ENCODE measurements at regions of chr3 and their contacts with region 1.

Region 1: DNA sequence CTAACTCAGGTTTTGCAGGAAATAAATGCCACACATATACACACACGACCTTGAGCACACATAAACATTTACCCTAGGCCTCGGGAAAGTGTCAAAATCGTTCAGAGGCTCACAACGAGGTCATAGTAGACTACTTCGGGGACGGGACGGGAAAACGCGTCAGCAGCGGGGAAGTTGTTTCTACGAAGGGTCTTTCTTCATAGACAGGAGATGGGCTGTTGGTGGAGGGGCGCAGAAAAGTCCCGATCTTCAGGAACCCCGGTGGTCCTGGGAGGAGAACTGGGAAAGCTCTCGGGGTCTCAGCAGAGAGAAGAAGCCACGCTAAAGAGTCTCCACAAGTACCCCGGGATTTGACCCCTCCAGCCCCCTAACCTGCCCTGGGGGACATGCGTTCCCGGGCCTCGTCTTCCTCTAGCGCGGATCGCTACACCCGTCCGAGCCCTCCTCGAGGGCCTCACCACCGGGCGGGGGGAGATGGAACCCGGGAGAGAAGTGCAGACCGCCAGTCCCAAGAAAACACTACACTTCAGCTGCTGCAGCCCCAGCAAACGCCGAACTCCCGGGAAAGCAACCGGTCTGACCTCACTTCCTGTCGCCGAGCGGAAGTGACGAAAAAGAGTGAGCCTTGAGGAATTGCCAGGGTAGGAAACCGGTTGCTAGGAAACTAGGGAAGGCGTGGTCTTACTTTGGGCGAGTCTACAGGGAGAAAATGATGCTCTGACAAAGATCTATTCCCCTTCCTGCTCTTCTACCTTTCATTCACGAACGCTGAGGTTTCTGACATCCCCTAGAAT is at the start of gene PIK3R4:
- DNase-seq: peak; percentile 89 to 97 (median 94)
- H3K4me3 ChIP-seq: peak within 1 kb of the TSS; percentile 82
- H3K4me3 Mint-ChIP-seq: peak within 1 kb of the TSS in 6 of 7 donors; percentile 89 to 90 (median 89)
- H3K27ac ChIP-seq: peak within 1 kb of the TSS; percentile 91
- H3K27ac Mint-ChIP-seq: peak within 1 kb of the TSS in 7 of 8 donors; percentile 93 to 99 (median 98)
- H3K4me1 ChIP-seq: peaks cover 44% of the 10 kb centered on the region
- H3K4me1 Mint-ChIP-seq: peaks cover 48 to 53% (median 51%) of the 10 kb centered on the region in 3 donors
- H3K27me3 ChIP-seq: no peaks in the 10 kb centered on the region
- H3K27me3 Mint-ChIP-seq: peaks cover 0 to 9% of the 10 kb centered on the region in 2 donors
- total RNA-seq, gene PIK3R4: 32.0 to 34.8 TPM

Region 2: DNA sequence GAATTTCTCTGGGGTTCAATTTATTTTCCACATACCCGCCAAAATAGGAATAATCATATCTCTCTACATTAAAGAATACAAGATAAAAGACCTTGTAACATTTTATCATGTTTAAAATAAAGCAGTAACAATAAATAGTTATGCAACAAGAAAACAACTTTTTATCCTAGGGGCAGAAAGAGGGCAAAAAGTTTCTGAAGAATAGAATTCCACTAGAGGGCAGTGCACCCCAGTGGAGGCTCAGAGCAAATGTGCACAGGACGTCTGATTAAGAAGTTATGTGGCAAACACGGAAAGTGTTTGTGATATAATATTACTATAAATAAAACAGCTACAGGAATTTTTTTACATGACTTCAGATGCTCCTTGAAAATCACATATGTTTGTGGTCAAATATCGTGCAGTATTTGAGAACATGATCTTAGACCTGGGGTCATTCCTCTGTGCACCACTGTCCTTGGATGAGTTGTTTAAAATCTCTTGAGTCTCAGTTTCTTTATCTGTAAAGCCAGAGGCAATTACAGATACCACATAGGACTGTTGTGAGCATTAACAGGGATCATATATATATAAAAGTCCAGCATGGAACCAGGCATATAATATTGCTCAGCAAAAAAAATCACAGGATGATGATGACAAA is 13.4 kb after region 1 on chr3:
- CTCF ChIA-PET with region 1: interaction called, 10 read pairs
- POLR2A ChIA-PET with region 1: no interaction called
- DNase-seq: peak; percentile 19 to 63 (median 41)
- H3K4me3 ChIP-seq: no peak overlapping the region
- H3K4me3 Mint-ChIP-seq: no peak overlapping the region
- H3K27ac ChIP-seq: no peak overlapping the region
- H3K27ac Mint-ChIP-seq: peak overlapping the region in 1 of 8 donors; percentile 66
- H3K4me1 ChIP-seq: no peaks in the 10 kb centered on the region
- H3K4me1 Mint-ChIP-seq: no peaks in the 10 kb centered on the region
- H3K27me3 ChIP-seq: no peaks in the 10 kb centered on the region
- H3K27me3 Mint-ChIP-seq: peaks cover 5 to 26% of the 10 kb centered on the region in 2 donors

Region 3: DNA sequence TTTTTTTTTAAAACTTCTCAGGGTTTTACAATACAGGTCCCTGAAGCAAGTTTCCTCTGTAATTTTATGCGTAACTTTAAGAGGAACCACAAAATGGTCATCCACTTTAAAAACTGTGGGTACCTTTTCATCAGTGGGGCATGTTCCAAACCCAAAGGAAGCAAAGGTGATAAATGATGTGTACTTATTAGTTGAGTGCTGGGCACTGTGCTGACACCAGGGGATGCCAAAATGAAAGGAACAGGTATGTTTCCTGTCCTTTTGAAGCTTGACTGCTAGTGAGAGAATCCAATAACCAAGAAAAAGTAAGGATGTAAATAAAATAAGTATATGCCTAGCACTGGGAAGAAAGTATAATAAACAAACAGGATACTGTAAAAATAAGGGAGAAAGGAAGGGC is 407.1 kb after region 1 on chr3:
- CTCF ChIA-PET with region 1: no interaction called
- POLR2A ChIA-PET with region 1: no interaction called
- DNase-seq: no peak
- H3K4me3 ChIP-seq: no peak overlapping the region
- H3K4me3 Mint-ChIP-seq: no peak overlapping the region
- H3K27ac ChIP-seq: no peak overlapping the region
- H3K27ac Mint-ChIP-seq: no peak overlapping the region
- H3K4me1 ChIP-seq: no peaks in the 10 kb centered on the region
- H3K4me1 Mint-ChIP-seq: no peaks in the 10 kb centered on the region
- H3K27me3 ChIP-seq: no peaks in the 10 kb centered on the region
- H3K27me3 Mint-ChIP-seq: peaks cover 0 to 4% of the 10 kb centered on the region in 2 donors